A549 (cell line): ENCODE measurements at regions of chr17 and their contacts with region 1.

Region 1: DNA sequence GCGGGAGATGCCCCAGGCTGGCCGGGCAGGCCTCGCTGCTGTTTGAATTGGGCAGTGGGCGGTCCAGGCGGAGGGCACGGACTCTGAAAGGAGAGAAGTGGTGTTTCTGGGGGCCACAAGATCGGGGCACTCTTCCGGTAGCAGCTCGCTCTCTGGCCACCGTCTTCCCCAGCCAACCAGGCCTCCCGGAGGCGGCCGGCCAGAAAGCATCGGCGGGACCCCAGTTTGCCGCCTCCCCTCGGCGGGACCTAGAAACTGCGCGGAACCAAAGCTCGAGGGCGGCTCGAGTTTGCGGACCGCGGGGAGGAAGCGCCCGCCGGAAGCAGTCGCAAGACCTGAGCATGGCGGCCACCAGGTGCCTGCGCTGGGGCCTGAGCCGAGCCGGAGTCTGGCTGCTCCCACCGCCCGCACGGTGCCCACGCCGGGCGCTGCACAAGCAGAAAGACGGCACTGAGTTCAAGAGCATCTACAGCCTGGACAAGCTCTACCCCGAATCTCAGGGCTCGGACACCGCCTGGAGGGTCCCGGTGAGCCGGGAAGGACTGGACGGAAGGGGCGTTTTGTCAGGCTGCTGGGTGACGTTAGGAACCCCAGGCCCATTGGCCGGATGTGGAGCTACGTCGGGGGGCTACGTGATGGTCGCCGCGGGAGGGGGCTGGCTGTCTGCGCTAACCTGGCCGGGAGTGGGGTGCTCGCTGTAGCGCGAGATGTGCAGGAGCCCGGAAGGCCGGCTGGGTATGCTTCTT is at the start of gene MRPL58:
- DNase-seq: peak; percentile 94 to 95
- ATAC-seq: peak; percentile 92 to 96
- H3K4me3 ChIP-seq: peak within 1 kb of the TSS; percentile 76
- H3K27ac ChIP-seq: peak within 1 kb of the TSS; percentile 85 to 92
- H3K4me1 ChIP-seq: peaks cover 18% of the 10 kb centered on the region
- CTCF ChIP-seq: peak; percentile 36; the same call in 2 of the 3 replicates
- EP300 ChIP-seq: no peak
- POLR2A ChIP-seq: peak; percentile 79
- RAD21 ChIP-seq: peak; percentile 37 to 48; a peak in 4 of 5 replicates
- polyA plus RNA-seq, gene MRPL58: 86.4 and 127 TPM in 2 replicates

Region 2: GRCh38 chr17:74873038-74873873 is 139.3 kb before region 1 on chr17:
- CTCF ChIA-PET with region 1: no interaction called
- POLR2A ChIA-PET with region 1: interaction called, 15 read pairs
- DNase-seq: peak; percentile 100
- ATAC-seq: peak; percentile 92 to 96
- H3K4me3 ChIP-seq: peak overlapping the region; percentile 69
- H3K27ac ChIP-seq: peak overlapping the region; percentile 91 to 94
- H3K4me1 ChIP-seq: peaks cover 22% of the 10 kb centered on the region
- CTCF ChIP-seq: no peak
- EP300 ChIP-seq: no peak
- POLR2A ChIP-seq: peak; percentile 96
- RAD21 ChIP-seq: no peak

Region 3: GRCh38 chr17:74972107-74972972 is 40.2 kb before region 1 on chr17 and contains the start of gene HID1:
- CTCF ChIA-PET with region 1: interaction called, 404 read pairs
- POLR2A ChIA-PET with region 1: interaction called, 31 read pairs
- DNase-seq: peak; percentile 56 to 88
- ATAC-seq: peak; percentile 83 to 85
- H3K4me3 ChIP-seq: peak within 1 kb of the TSS; percentile 71
- H3K27ac ChIP-seq: peak within 1 kb of the TSS; percentile 77 to 84
- H3K4me1 ChIP-seq: peaks cover 9% of the 10 kb centered on the region
- CTCF ChIP-seq: no peak
- EP300 ChIP-seq: no peak
- POLR2A ChIP-seq: no peak; the same call in 1 of the 2 replicates
- RAD21 ChIP-seq: no peak
- polyA plus RNA-seq, gene HID1: 11.7 and 15.2 TPM in 2 replicates

Region 4: DNA sequence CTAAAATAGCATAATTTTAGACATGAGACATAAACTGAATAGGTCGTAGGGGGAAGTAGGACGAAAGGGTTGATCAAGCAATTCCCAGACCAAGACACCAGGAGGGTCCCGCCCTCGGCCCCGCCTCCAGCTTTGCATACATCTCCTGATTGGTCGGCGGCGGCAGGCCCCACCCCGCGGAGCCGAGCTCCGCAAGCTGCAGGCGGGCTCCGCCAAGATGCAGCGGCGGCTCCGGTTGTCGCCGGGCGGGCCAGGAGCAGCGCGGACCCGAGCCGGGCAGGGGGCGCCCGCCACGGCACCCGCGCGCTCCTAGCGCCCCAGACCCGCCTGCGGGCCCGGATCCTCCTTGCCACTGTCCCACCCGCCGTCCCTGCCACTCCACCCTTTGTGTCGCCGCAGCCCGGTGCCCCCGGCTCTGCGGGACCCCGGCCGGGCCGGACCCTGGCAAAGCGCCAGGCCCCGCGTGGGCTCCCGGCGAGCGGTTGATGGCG is 25.1 kb before region 1 on chr17 and contains the start of gene CDR2L:
- CTCF ChIA-PET with region 1: interaction called, 332 read pairs
- POLR2A ChIA-PET with region 1: interaction called, 107 read pairs
- DNase-seq: peak; percentile 94
- ATAC-seq: peak; percentile 82 to 87
- H3K4me3 ChIP-seq: peak within 1 kb of the TSS; percentile 80
- H3K27ac ChIP-seq: peak within 1 kb of the TSS; percentile 94 to 95
- H3K4me1 ChIP-seq: peaks cover 53% of the 10 kb centered on the region
- CTCF ChIP-seq: no peak
- EP300 ChIP-seq: no peak
- POLR2A ChIP-seq: peak; percentile 95
- RAD21 ChIP-seq: no peak
- polyA plus RNA-seq, gene CDR2L: 18.0 and 18.5 TPM in 2 replicates

Region 5: GRCh38 chr17:75034236-75034908 is 21.9 kb after region 1 on chr17:
- CTCF ChIA-PET with region 1: interaction called, 56 read pairs
- POLR2A ChIA-PET with region 1: interaction called, 46 read pairs
- DNase-seq: peak; percentile 81 to 97
- ATAC-seq: peak; percentile 57 to 71
- H3K4me3 ChIP-seq: peak overlapping the region; percentile 73
- H3K27ac ChIP-seq: peak overlapping the region; percentile 97
- H3K4me1 ChIP-seq: peaks cover 30% of the 10 kb centered on the region
- CTCF ChIP-seq: no peak
- EP300 ChIP-seq: no peak
- POLR2A ChIP-seq: no peak
- RAD21 ChIP-seq: no peak; a peak in 1 of 5 replicates